ENCODE measurements at regions of chr3 and their contacts with region 1.

Region 1: GRCh38 chr3:171459942-171460724 is at the start of gene TNIK:
- DNase-seq: peak; percentile 88
- H3K4me3 Mint-ChIP-seq: peak within 1 kb of the TSS; percentile 90
- H3K27ac Mint-ChIP-seq: peak within 1 kb of the TSS; percentile 86
- H3K4me1 Mint-ChIP-seq: peaks cover 20% of the 10 kb centered on the region
- H3K27me3 Mint-ChIP-seq: no peaks in the 10 kb centered on the region
- CTCF ChIP-seq: peak; percentile 37
- total RNA-seq, gene TNIK: 3.4 and 4.3 TPM in 2 replicates

Region 2: GRCh38 chr3:171149526-171150116 is 310.5 kb before region 1 on chr3:
- CTCF ChIA-PET with region 1: no interaction called
- POLR2A ChIA-PET with region 1: no interaction called
- intact Hi-C with region 1: no loop called
- DNase-seq: no peak
- H3K4me3 Mint-ChIP-seq: no peak overlapping the region
- H3K27ac Mint-ChIP-seq: no peak overlapping the region
- H3K4me1 Mint-ChIP-seq: peaks cover 6% of the 10 kb centered on the region
- H3K27me3 Mint-ChIP-seq: no peaks in the 10 kb centered on the region
- CTCF ChIP-seq: no peak

Region 3: DNA sequence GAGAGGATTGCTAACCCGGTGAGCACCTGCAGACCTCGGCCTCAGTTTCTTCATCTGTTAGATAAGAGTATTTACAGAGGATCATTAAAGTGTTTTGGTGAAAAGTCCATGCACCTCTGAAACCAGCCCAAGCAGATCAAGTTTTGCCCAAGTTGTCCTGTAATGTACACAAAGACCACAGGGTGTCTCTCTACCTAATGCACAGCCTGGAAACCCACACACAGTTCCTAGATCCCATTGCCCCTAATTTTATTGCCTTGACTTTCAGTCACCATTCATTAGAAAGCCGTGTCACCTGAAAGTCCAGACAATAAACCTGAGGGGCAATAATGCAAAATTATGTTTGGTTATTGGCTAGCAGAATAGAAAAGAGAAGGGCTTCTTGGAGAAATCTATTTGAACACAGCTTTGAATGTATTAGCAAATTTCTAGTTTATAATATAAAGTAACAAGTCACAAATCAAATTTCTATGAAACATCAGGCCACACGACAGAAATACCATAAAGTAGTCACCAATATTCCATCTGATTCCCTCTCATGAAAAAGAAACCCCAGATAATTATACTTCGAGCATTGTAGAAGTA is 272.3 kb before region 1 on chr3:
- CTCF ChIA-PET with region 1: interaction called, 7 read pairs
- POLR2A ChIA-PET with region 1: interaction called, 5 read pairs
- intact Hi-C with region 1: loop called (anchors 1 kb)
- DNase-seq: peak; percentile 60
- H3K4me3 Mint-ChIP-seq: no peak overlapping the region
- H3K27ac Mint-ChIP-seq: no peak overlapping the region
- H3K4me1 Mint-ChIP-seq: peaks cover 22% of the 10 kb centered on the region
- H3K27me3 Mint-ChIP-seq: no peaks in the 10 kb centered on the region
- CTCF ChIP-seq: peak; percentile 70

Region 4: DNA sequence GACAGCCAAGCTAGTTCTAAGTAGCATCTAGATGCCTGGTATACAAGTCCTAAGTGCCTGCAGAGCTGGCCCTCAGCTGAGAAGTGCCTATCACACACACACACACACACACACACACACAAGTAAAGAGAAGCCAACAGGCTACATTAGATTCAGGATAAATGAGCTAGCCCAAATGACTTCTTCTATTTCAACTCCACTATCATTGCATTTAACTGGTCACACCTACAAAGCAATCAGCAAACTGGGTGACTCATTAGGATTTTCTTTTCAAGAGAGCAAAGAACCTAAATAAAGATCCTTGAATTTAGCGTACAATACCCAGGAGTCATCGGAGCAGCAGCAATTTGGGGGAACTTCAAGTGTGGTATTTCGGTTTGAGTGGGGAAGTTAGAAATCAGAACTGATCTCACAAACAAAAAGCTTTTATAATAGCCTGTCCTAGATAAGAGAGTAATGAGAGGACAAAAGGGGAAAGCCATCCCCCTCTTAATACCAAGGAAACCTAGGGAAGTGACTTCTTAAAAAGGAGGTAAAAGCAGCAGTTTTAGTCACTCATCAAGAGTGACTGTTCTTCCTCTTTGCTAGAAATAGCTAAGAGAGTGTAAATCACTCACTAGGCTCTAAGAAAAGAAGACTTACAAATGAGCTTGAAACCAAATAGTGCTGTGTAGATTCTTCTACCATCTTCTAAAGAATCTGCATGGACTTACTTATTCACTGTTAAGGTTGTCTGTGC is 112.7 kb before region 1 on chr3:
- CTCF ChIA-PET with region 1: no interaction called
- POLR2A ChIA-PET with region 1: interaction called, 11 read pairs
- intact Hi-C with region 1: loop called (anchors 5 kb)
- DNase-seq: peak; percentile 45
- H3K4me3 Mint-ChIP-seq: peak overlapping the region; percentile 16
- H3K27ac Mint-ChIP-seq: peak overlapping the region; percentile 1
- H3K4me1 Mint-ChIP-seq: peaks cover 40% of the 10 kb centered on the region
- H3K27me3 Mint-ChIP-seq: no peaks in the 10 kb centered on the region
- CTCF ChIP-seq: no peak

Region 5: DNA sequence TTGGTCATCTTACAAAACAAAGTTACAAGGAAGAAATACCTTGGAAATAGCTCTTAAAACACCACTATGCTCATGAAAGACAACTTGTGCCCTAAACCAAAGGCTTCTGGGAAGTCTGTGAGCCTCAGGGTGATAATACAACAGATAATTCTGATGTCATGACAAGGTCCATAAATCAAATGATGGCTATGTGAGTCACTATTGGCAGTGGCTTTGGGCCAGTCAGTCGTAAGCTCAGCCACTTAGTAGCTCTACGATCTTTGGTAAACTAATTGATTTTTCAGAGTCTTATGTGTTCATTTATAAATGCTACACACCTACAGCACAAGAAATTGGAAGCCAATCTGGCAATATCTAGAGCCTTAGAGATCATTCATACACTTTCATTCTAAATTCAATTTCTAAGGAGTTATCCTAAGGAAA is 12.8 kb before region 1 on chr3:
- CTCF ChIA-PET with region 1: interaction called, 4 read pairs
- POLR2A ChIA-PET with region 1: interaction called, 13 read pairs
- intact Hi-C with region 1: no loop called
- DNase-seq: peak; percentile 63
- H3K4me3 Mint-ChIP-seq: no peak overlapping the region
- H3K27ac Mint-ChIP-seq: no peak overlapping the region
- H3K4me1 Mint-ChIP-seq: peaks cover 6% of the 10 kb centered on the region
- H3K27me3 Mint-ChIP-seq: no peaks in the 10 kb centered on the region
- CTCF ChIP-seq: no peak

Region 6: GRCh38 chr3:171503817-171504216 is 43.7 kb after region 1 on chr3:
- CTCF ChIA-PET with region 1: no interaction called
- POLR2A ChIA-PET with region 1: no interaction called
- intact Hi-C with region 1: no loop called
- DNase-seq: no peak
- H3K4me3 Mint-ChIP-seq: no peak overlapping the region
- H3K27ac Mint-ChIP-seq: no peak overlapping the region
- H3K4me1 Mint-ChIP-seq: no peaks in the 10 kb centered on the region
- H3K27me3 Mint-ChIP-seq: no peaks in the 10 kb centered on the region
- CTCF ChIP-seq: no peak

Region 7: DNA sequence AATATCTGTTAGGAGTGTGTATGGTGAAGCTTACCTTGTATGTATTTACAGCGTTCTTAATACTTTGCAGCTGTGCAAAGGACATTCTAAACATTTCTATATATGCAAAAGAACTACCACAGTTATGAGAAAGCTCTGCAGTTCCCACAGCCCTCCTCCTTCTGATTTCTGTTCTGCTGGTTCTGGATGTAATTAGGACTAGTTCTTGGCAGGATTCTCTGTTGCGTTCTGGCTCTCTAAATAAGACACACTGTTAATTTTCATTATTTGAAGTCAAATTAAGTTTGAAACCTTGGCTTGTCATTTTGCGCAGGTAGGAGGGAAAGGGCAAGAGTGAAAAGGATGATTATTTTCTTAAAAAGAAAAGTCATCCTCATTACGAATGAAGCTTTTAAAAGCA is 655.7 kb after region 1 on chr3:
- CTCF ChIA-PET with region 1: no interaction called
- POLR2A ChIA-PET with region 1: no interaction called
- intact Hi-C with region 1: no loop called
- DNase-seq: no peak
- H3K4me3 Mint-ChIP-seq: no peak overlapping the region
- H3K27ac Mint-ChIP-seq: no peak overlapping the region
- H3K4me1 Mint-ChIP-seq: peaks cover 5% of the 10 kb centered on the region
- H3K27me3 Mint-ChIP-seq: no peaks in the 10 kb centered on the region
- CTCF ChIP-seq: no peak